ENCODE measurements at regions of chr11 and their contacts with region 1.

Region 1: GRCh38 chr11:71448257-71449171 is at the start of gene DHCR7:
- DNase-seq: peak; percentile 99 to 100
- H3K4me3 ChIP-seq: peak within 1 kb of the TSS; percentile 88
- H3K4me3 Mint-ChIP-seq: peak within 1 kb of the TSS; percentile 86
- H3K27ac Mint-ChIP-seq: peak within 1 kb of the TSS; percentile 59
- H3K4me1 ChIP-seq: peaks cover 21% of the 10 kb centered on the region
- H3K4me1 Mint-ChIP-seq: peaks cover 36% of the 10 kb centered on the region
- H3K27me3 ChIP-seq: no peaks in the 10 kb centered on the region
- H3K27me3 Mint-ChIP-seq: no peaks in the 10 kb centered on the region
- CTCF ChIP-seq: no peak
- total RNA-seq, gene DHCR7: 344 and 371 TPM in 2 replicates

Region 2: DNA sequence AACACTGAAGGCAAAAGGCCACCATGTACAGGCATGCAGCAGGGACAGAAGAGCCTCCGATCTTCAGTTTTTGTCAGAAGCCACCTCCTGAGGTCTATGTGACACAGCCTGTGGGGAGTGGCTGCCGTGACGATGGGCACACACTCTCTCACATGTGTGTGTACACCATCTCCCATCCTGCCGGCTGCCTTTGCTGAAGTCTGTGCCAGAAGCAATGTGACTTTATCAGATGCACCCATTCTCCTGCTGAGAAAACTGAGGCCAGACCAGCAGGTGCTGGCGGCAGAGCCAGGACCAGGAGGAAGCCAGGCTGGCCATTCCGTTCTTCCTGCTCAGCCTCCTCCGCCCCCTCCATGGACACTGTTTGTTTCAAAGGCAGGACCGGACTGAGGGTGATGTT is 212.8 kb before region 1 on chr11:
- CTCF ChIA-PET with region 1: no interaction called
- POLR2A ChIA-PET with region 1: interaction called, 10 read pairs
- intact Hi-C with region 1: no loop called
- DNase-seq: peak in 1 of 2 experiments; percentile 26
- H3K4me3 ChIP-seq: no peak overlapping the region
- H3K4me3 Mint-ChIP-seq: no peak overlapping the region
- H3K27ac Mint-ChIP-seq: no peak overlapping the region
- H3K4me1 ChIP-seq: no peaks in the 10 kb centered on the region; the same call in none of the 2 replicates
- H3K4me1 Mint-ChIP-seq: peaks cover under 1% of the 10 kb centered on the region
- H3K27me3 ChIP-seq: no peaks in the 10 kb centered on the region
- H3K27me3 Mint-ChIP-seq: no peaks in the 10 kb centered on the region
- CTCF ChIP-seq: no peak

Region 3: DNA sequence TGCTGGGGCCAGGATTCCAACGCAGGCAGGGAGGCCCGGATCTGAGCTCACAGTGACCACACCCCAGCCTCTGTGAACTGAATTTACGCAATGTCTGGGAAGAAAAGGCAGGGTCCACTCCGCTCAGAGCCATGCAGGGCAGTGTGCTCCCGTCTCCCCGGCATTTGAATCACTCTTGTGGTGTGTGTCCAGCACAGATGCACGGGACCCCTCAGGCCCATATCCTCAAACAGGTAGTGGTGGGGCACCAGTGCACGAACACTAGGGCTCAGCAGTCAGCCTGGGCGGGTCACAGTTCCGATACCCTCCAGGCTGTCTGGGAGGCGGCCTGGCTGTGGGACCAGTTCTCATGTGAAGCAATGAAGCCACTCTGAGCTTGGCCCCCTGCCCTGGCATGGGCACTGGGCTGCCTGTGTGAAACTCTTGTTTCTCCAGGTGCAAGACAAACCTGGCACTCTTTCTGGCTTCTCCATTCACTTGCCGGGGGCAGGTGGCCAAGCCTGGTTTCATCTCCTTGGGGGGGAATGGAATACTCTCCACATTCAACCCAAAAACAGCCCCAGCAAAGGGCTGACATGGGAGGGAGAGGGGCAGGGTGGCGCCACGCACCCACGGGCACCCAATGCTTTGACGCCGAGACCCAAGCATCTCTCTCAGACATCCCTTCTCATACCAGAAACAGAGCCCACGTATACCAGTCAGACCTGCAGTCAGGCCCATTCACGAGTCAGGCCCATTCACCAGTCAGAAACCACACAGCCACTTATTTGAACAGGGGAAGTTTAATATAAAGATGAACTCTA is 14.7 kb before region 1 on chr11:
- CTCF ChIA-PET with region 1: interaction called, 9 read pairs
- POLR2A ChIA-PET with region 1: interaction called, 11 read pairs
- intact Hi-C with region 1: no loop called
- DNase-seq: peak; percentile 72 to 80
- H3K4me3 ChIP-seq: no peak overlapping the region
- H3K4me3 Mint-ChIP-seq: no peak overlapping the region
- H3K27ac Mint-ChIP-seq: peak overlapping the region; percentile 9
- H3K4me1 ChIP-seq: peaks cover 13% of the 10 kb centered on the region
- H3K4me1 Mint-ChIP-seq: peaks cover 17% of the 10 kb centered on the region
- H3K27me3 ChIP-seq: no peaks in the 10 kb centered on the region
- H3K27me3 Mint-ChIP-seq: no peaks in the 10 kb centered on the region
- CTCF ChIP-seq: no peak

Region 4: GRCh38 chr11:71481190-71481883 is 32.8 kb after region 1 on chr11:
- CTCF ChIA-PET with region 1: interaction called, 5 read pairs
- POLR2A ChIA-PET with region 1: interaction called, 8 read pairs
- intact Hi-C with region 1: loop called (anchors 2 kb)
- DNase-seq: peak; percentile 75 to 86
- H3K4me3 ChIP-seq: no peak overlapping the region
- H3K4me3 Mint-ChIP-seq: peak overlapping the region; percentile 49
- H3K27ac Mint-ChIP-seq: peak overlapping the region; percentile 87
- H3K4me1 ChIP-seq: peaks cover 25% of the 10 kb centered on the region
- H3K4me1 Mint-ChIP-seq: peaks cover 30% of the 10 kb centered on the region
- H3K27me3 ChIP-seq: no peaks in the 10 kb centered on the region
- H3K27me3 Mint-ChIP-seq: no peaks in the 10 kb centered on the region
- CTCF ChIP-seq: no peak

Region 5: DNA sequence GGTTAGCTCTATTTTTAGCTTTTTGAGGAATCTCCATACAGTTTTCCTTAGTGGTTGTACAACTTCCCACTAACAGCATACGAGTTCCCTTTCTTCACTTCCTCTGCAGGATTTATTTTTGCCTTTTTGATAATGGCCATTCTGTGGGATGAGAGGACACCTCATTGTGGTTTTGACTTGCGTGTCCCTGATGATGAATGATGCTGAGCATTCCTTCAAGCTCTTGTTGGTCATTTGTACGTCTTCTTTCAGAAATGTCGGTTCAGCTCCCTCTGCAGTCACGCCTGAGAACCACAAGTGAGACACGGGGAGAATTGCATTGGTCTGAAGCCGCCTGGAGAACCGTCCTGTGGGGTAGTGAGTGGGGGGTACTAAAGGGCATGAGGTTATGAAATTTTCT is 114.9 kb after region 1 on chr11:
- CTCF ChIA-PET with region 1: interaction called, 24 read pairs
- POLR2A ChIA-PET with region 1: interaction called, 4 read pairs
- intact Hi-C with region 1: loop called (anchors 2 kb)
- DNase-seq: peak; percentile 74 to 76
- H3K4me3 ChIP-seq: no peak overlapping the region
- H3K4me3 Mint-ChIP-seq: no peak overlapping the region
- H3K27ac Mint-ChIP-seq: no peak overlapping the region
- H3K4me1 ChIP-seq: no peaks in the 10 kb centered on the region
- H3K4me1 Mint-ChIP-seq: peaks cover 7% of the 10 kb centered on the region
- H3K27me3 ChIP-seq: no peaks in the 10 kb centered on the region
- H3K27me3 Mint-ChIP-seq: peaks cover 20% of the 10 kb centered on the region
- CTCF ChIP-seq: peak; percentile 81

Region 6: DNA sequence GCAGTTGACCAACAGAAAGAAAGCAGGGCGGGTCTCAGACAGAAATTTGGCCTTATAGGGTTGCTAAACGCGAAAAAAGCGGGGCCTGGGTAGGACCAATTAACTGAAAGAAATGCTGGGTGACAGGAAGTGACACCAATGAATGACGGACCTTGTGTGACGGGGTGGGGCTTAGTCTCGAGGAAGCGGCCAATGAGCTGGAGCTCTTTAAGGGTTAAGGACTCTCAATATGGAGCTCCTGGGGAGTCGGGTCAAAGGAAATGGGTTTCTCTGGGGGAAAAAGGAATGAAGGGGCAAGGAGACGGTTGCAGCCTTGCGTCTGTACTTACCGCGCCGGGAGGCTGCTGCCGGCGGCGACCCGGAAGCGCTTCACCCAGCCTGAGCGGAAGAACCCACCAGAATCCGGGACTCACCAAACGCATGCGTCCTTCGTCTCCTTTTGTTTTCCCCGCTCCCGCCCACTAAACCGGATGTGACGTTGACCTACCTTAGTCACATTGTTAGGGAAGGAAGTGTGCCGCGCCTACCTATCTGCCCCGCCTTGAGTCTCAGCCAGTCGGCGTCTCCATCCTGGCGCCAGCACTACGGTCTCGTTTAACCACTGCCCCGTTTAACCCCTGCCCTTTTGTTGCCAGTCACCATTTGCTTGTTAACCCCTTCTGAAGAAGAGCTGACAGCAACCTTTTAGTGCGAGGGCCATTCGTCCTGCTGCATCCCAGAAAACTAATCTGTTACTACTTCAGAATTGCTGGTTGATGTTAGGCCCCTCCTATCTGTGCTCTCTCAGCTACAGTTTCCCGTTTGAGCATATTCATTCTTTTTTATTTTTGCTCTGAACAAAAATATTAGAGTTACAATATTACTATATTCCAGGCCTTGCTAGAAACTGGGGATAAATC is 664.1 kb after region 1 on chr11 and contains the start of gene ANAPC15:
- CTCF ChIA-PET with region 1: no interaction called
- POLR2A ChIA-PET with region 1: interaction called, 13 read pairs
- intact Hi-C with region 1: no loop called
- DNase-seq: peak; percentile 99 to 100
- H3K4me3 ChIP-seq: peak within 1 kb of the TSS; percentile 52
- H3K4me3 Mint-ChIP-seq: peak within 1 kb of the TSS; percentile 94
- H3K27ac Mint-ChIP-seq: peak within 1 kb of the TSS; percentile 100
- H3K4me1 ChIP-seq: peaks cover 9% of the 10 kb centered on the region
- H3K4me1 Mint-ChIP-seq: no peaks in the 10 kb centered on the region
- H3K27me3 ChIP-seq: no peaks in the 10 kb centered on the region
- H3K27me3 Mint-ChIP-seq: no peaks in the 10 kb centered on the region
- CTCF ChIP-seq: no peak
- total RNA-seq, gene ANAPC15: 98.6 and 105 TPM in 2 replicates

Measured in Caco-2 (cell line).